ENCODE measurements at regions of chr4 and their contacts with region 1.

Region 1: GRCh38 chr4:153603258-153603657 is 80.8 kb upstream of the TLR2 start:
- DNase-seq: no peak
- ATAC-seq: no peak
- H3K4me3 ChIP-seq: no peak overlapping the region
- H3K4me3 Mint-ChIP-seq: no peak overlapping the region
- H3K27ac ChIP-seq: no peak overlapping the region
- H3K27ac Mint-ChIP-seq: no peak overlapping the region
- H3K4me1 ChIP-seq: no peaks in the 10 kb centered on the region
- H3K4me1 Mint-ChIP-seq: peaks cover 9% of the 10 kb centered on the region
- H3K27me3 ChIP-seq: no peaks in the 10 kb centered on the region
- H3K27me3 Mint-ChIP-seq: no peaks in the 10 kb centered on the region
- CTCF ChIP-seq: no peak

Region 2: DNA sequence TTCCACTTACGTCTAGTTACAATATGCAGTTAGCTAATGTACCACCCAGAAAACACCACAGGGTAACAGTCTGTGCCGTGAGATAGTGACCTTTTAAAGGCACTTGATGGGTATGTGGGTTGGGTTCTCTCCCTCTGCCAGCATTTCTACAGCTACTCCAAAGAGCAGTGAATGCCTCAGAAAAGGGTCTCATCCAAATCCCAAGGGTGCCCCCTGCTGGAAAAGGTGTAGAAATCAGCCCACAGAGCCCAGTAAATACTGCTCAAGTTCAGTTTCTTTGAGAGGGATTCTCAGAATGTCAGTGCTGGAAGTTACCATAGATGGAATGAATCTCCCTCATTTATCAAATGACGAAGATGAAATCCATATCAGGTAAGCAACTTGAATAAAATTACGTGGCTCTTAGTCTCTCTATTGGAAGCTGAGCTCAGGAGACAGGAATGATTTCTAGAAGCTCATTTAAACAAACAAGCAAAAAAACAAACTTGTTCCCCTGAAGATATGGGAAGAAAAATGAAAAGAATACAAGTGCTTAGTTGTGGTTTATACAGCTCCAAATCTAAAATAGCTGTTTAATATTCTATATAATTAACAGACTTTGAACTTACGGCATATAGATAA is 147.0 kb after region 1 on chr4:
- CTCF ChIA-PET with region 1: no interaction called
- POLR2A ChIA-PET with region 1: no interaction called
- intact Hi-C with region 1: no loop called
- DNase-seq: peak; percentile 21 to 70 (median 56)
- ATAC-seq: peak; percentile 64
- H3K4me3 ChIP-seq: no peak overlapping the region
- H3K4me3 Mint-ChIP-seq: no peak overlapping the region
- H3K27ac ChIP-seq: no peak overlapping the region
- H3K27ac Mint-ChIP-seq: no peak overlapping the region
- H3K4me1 ChIP-seq: peaks cover 10% of the 10 kb centered on the region
- H3K4me1 Mint-ChIP-seq: peaks cover 12% of the 10 kb centered on the region
- H3K27me3 ChIP-seq: no peaks in the 10 kb centered on the region
- H3K27me3 Mint-ChIP-seq: peaks cover 4% of the 10 kb centered on the region
- CTCF ChIP-seq: peak; percentile 76

Region 3: GRCh38 chr4:154529728-154530519 is 926.7 kb after region 1 on chr4:
- CTCF ChIA-PET with region 1: no interaction called
- POLR2A ChIA-PET with region 1: no interaction called
- intact Hi-C with region 1: loop called in 1 of 2 experiments (anchors 10 kb)
- DNase-seq: no peak
- ATAC-seq: no peak
- H3K4me3 ChIP-seq: no peak overlapping the region
- H3K4me3 Mint-ChIP-seq: no peak overlapping the region
- H3K27ac ChIP-seq: no peak overlapping the region
- H3K27ac Mint-ChIP-seq: no peak overlapping the region
- H3K4me1 ChIP-seq: no peaks in the 10 kb centered on the region
- H3K4me1 Mint-ChIP-seq: no peaks in the 10 kb centered on the region
- H3K27me3 ChIP-seq: no peaks in the 10 kb centered on the region
- H3K27me3 Mint-ChIP-seq: peaks cover 11% of the 10 kb centered on the region
- CTCF ChIP-seq: no peak